Sigmoid colon (tissue), 7 donors: ENCODE measurements at regions of chr10 and their contacts with region 1.

Region 1: GRCh38 chr10:97701438-97702069 is 12.0 kb upstream of the MARVELD1 start:
- DNase-seq: no peak
- H3K4me3 ChIP-seq: no peak overlapping the region
- H3K27ac ChIP-seq: no peak overlapping the region
- H3K4me1 ChIP-seq: no peaks in the 10 kb centered on the region
- H3K27me3 ChIP-seq: no peaks in the 10 kb centered on the region
- CTCF ChIP-seq: peak; percentile 71 to 89 (median 80)
- EP300 ChIP-seq: no peak
- POLR2A ChIP-seq: no peak

Region 2: GRCh38 chr10:97676770-97677581 is 24.6 kb before region 1 on chr10:
- intact Hi-C with region 1: loop called (anchors 2 kb)
- DNase-seq: no peak
- H3K4me3 ChIP-seq: no peak overlapping the region
- H3K27ac ChIP-seq: peak overlapping the region in 2 of 4 donors; percentile 35
- H3K4me1 ChIP-seq: peaks cover 0 to 2% (median under 1%) of the 10 kb centered on the region in 4 donors
- H3K27me3 ChIP-seq: no peaks in the 10 kb centered on the region
- CTCF ChIP-seq: peak; percentile 85 to 90 (median 88)
- EP300 ChIP-seq: no peak
- POLR2A ChIP-seq: no peak

Region 3: GRCh38 chr10:97849687-97850402 is 148.3 kb after region 1 on chr10 and contains the start of gene GOLGA7B:
- intact Hi-C with region 1: no loop called
- DNase-seq: no peak
- H3K4me3 ChIP-seq: peak within 1 kb of the TSS in 3 of 4 donors; percentile 45 to 53 (median 52)
- H3K27ac ChIP-seq: no peak within 1 kb of the TSS
- H3K4me1 ChIP-seq: peaks cover 0 to 15% (median 13%) of the 10 kb centered on the region in 4 donors
- H3K27me3 ChIP-seq: peaks cover 31 to 65% (median 46%) of the 10 kb centered on the region in 3 donors
- CTCF ChIP-seq: no peak
- EP300 ChIP-seq: no peak
- POLR2A ChIP-seq: no peak
- total RNA-seq, gene GOLGA7B: 0.16 to 0.71 (median 0.41) TPM